Endothelial cell of umbilical vein (primary cell): ENCODE measurements at regions of chr11 and their contacts with region 1.

Region 1: GRCh38 chr11:250740-251299 is 14.0 kb downstream of the PSMD13 start:
- DNase-seq: peak; percentile 61
- H3K4me3 ChIP-seq: no peak overlapping the region
- H3K27ac ChIP-seq: no peak overlapping the region
- H3K4me1 ChIP-seq: no peaks in the 10 kb centered on the region
- H3K27me3 ChIP-seq: no peaks in the 10 kb centered on the region
- CTCF ChIP-seq: peak; percentile 67 to 81
- POLR2A ChIP-seq: no peak

Region 2: GRCh38 chr11:236774-237767 is 13.7 kb before region 1 on chr11 and contains the start of gene PSMD13:
- CTCF ChIA-PET with region 1: interaction called, 33 read pairs
- POLR2A ChIA-PET with region 1: no interaction called
- dilution Hi-C with region 1: no loop called
- intact Hi-C with region 1: no loop called
- DNase-seq: peak; percentile 85
- H3K4me3 ChIP-seq: peak within 1 kb of the TSS; percentile 81 to 100 (median 99)
- H3K27ac ChIP-seq: peak within 1 kb of the TSS; percentile 92
- H3K4me1 ChIP-seq: peaks cover 16% of the 10 kb centered on the region
- H3K27me3 ChIP-seq: no peaks in the 10 kb centered on the region
- CTCF ChIP-seq: no peak
- POLR2A ChIP-seq: peak; percentile 83
- total RNA-seq, gene PSMD13: 168 and 179 TPM in 2 replicates

Region 3: DNA sequence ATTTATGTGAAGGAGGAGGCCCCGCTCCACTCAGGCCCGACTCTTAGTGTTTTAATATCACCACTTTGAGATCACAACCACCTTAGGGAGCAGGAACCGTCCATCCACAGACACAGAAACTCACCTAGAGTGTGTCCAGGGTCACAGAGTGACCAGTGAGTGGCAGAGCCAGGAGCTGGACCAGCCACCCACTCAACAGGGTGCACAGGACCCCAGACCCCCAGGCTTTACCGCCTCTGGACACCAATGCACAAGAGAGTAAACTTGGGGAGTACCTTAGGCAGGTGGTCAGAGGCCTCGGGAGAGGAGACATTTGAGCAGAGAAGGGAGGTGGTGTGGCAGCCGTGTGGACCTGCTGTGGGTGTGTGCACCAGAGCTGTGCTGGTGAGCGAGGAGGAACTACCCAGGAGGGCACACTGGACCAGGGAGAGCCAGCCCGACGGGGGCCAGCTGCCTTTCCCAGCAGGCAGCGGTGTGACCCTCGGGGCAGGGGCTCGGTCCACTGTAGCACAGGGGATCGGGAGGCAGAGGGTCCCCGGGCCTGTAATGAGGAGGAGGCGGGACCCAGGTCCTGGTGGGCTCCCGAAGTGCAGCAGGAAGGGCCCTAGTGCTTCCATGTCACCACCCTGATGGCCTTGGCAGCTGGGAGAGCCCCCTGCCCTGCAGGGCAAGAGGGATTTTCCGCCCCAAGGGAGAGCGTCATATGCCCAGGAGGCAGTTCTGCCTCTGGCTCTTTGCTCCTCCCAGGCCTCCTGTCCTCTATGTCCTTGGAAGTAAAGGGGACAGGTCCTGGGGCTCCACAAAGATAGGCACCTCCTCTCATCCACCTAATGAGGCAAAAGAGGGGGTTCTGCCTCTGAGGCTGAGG is 19.9 kb after region 1 on chr11:
- CTCF ChIA-PET with region 1: interaction called, 12 read pairs
- POLR2A ChIA-PET with region 1: no interaction called
- dilution Hi-C with region 1: no loop called
- intact Hi-C with region 1: no loop called
- DNase-seq: no peak
- H3K4me3 ChIP-seq: no peak overlapping the region
- H3K27ac ChIP-seq: no peak overlapping the region
- H3K4me1 ChIP-seq: no peaks in the 10 kb centered on the region
- H3K27me3 ChIP-seq: peaks cover 11 to 12% of the 10 kb centered on the region in 2 experiments
- CTCF ChIP-seq: no peak
- POLR2A ChIP-seq: no peak

Region 4: GRCh38 chr11:355581-356458 is 105.0 kb after region 1 on chr11:
- CTCF ChIA-PET with region 1: interaction called, 14 read pairs
- POLR2A ChIA-PET with region 1: no interaction called
- dilution Hi-C with region 1: no loop called
- intact Hi-C with region 1: loop called (anchors 2 kb)
- DNase-seq: peak; percentile 96
- H3K4me3 ChIP-seq: peak overlapping the region in 1 of 3 experiments; percentile 14
- H3K27ac ChIP-seq: peak overlapping the region; percentile 96
- H3K4me1 ChIP-seq: peaks cover 8% of the 10 kb centered on the region
- H3K27me3 ChIP-seq: no peaks in the 10 kb centered on the region
- CTCF ChIP-seq: no peak
- POLR2A ChIP-seq: peak; percentile 77

Region 5: GRCh38 chr11:396948-397548 is 146.2 kb after region 1 on chr11:
- CTCF ChIA-PET with region 1: interaction called, 25 read pairs
- POLR2A ChIA-PET with region 1: interaction called, 3 read pairs
- dilution Hi-C with region 1: no loop called
- intact Hi-C with region 1: no loop called
- DNase-seq: peak; percentile 66
- H3K4me3 ChIP-seq: peak overlapping the region; percentile 6 to 43 (median 35)
- H3K27ac ChIP-seq: no peak overlapping the region
- H3K4me1 ChIP-seq: peaks cover 2% of the 10 kb centered on the region
- H3K27me3 ChIP-seq: peaks cover 0 to 3% of the 10 kb centered on the region in 2 experiments
- CTCF ChIP-seq: peak; percentile 44 to 80
- POLR2A ChIP-seq: no peak

Region 6: DNA sequence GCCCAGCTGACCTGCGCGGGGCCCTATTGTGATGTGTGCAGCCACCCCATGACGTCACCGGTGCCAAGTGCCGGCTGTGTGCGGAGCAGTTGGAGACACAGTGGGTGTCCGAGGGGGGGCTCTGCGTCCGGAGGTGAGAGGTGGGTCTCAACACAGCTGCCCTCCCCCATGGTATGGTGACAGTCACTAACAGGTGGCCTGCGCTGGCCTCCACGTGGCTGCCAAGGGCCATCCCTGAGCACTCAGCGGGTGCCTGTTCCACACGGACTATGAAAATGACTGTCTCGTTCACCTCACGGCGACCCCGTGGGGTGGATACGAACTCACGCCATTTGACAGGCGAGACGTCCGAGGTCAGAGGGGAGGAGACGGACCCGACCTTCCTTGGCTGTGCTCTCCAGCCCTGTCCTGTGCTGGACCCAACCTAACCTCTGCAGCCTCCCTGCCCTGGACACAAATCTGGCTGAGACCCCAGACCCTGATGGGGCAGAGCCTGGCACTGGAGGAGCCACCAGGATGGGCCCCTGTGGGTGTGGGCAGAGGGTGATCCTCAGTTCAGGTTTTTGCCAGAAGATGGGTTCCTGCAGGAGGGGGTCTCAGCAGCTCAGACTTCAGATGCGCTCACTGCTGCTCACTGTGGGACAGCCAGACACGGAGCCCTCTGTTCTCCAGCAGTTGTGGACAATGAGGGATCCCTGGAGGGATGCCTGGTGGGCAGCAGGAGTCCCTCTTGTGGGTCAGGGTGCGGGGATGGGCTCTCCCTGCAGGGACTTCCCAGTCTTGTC is 278.2 kb after region 1 on chr11:
- CTCF ChIA-PET with region 1: no interaction called
- POLR2A ChIA-PET with region 1: no interaction called
- dilution Hi-C with region 1: no loop called
- intact Hi-C with region 1: no loop called
- DNase-seq: no peak
- H3K4me3 ChIP-seq: no peak overlapping the region
- H3K27ac ChIP-seq: no peak overlapping the region
- H3K4me1 ChIP-seq: peaks cover 4% of the 10 kb centered on the region
- H3K27me3 ChIP-seq: no peaks in the 10 kb centered on the region
- CTCF ChIP-seq: no peak
- POLR2A ChIP-seq: no peak